ENCODE measurements at regions of chr20 and their contacts with region 1.

Region 1: GRCh38 chr20:53800808-53801604 is 207.4 kb upstream of the ZNF217 start:
- DNase-seq: peak; percentile 100
- ATAC-seq: peak; percentile 95
- H3K4me3 ChIP-seq: peak overlapping the region; percentile 28 to 48 (median 44); a peak in 4 of 6 replicates
- H3K27ac ChIP-seq: peak overlapping the region; percentile 86
- H3K4me1 ChIP-seq: peaks cover 92% of the 10 kb centered on the region
- H3K27me3 ChIP-seq: no peaks in the 10 kb centered on the region
- CTCF ChIP-seq: 0 out of 2 replicates have a peak, but pooled peaks have one; percentile 20
- EP300 ChIP-seq: peak; percentile 95 to 99; a peak in 3 of 4 replicates
- POLR2A ChIP-seq: 0 out of 4 replicates have a peak, but pooled peaks have one; percentile 23 to 36
- RAD21 ChIP-seq: peak; percentile 56

Region 2: DNA sequence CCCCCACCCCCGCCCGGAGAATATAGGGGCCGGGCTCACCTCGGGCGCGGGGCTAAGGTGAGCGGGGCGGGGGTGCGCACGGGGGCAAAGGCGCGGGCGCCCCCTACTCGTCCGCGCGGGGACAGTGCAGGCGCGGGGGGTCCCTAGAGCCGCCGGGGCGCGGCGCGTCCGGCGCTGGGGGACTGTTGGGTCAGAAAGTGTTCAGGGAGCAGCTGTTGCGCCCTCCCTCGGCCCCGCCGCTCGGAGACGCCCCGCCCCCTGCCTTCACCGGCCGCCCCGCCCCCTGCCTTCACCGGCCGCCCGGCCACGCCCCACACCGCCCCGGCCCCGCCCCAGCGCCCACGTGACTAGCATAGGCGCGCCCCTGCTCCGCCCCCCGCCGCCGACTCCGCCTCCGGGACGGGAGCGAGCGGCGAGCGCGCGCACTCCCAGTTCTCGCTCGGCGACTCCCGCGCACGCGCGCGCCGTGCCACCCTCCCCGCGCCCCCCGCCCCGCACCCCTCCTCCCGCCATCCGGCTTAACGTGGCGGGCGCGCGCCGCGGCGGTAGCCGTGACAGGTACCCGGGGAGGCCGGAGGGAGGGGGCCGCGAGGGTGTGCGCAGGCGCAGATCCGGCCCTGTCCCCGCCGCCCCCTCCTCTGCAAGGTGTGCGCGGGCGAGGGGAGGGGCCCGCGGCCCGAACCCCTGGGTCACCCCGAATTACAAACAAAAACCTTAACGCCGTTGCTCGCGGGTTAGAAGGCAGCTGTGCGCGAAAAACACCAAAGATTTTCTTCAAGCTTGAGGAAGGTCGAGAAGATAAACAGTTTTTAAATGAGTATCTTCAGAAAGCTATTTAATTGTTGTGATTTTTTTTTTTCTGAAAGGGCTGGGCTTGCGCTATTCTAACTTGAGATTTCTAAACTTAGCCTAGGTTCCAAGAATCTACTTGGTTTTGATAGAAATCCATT is 206.7 kb before region 1 on chr20:
- CTCF ChIA-PET with region 1: no interaction called
- POLR2A ChIA-PET with region 1: interaction called, 15 read pairs
- in situ Hi-C with region 1: no loop called
- intact Hi-C with region 1: no loop called
- DNase-seq: peak; percentile 89
- ATAC-seq: peak; percentile 88
- H3K4me3 ChIP-seq: peak overlapping the region; percentile 89 to 98 (median 90)
- H3K27ac ChIP-seq: peak overlapping the region; percentile 87
- H3K4me1 ChIP-seq: peaks cover 43% of the 10 kb centered on the region
- H3K27me3 ChIP-seq: no peaks in the 10 kb centered on the region; a peak in 1 of 5 replicates
- CTCF ChIP-seq: peak; percentile 88
- EP300 ChIP-seq: peak in 1 of 2 experiments; percentile 14; a peak in 1 of 4 replicates
- POLR2A ChIP-seq: peak; percentile 52 to 60
- RAD21 ChIP-seq: peak; percentile 91

Region 3: GRCh38 chr20:53718142-53719021 is 82.6 kb before region 1 on chr20:
- CTCF ChIA-PET with region 1: no interaction called
- POLR2A ChIA-PET with region 1: no interaction called
- in situ Hi-C with region 1: no loop called
- intact Hi-C with region 1: no loop called
- DNase-seq: no peak
- ATAC-seq: no peak
- H3K4me3 ChIP-seq: no peak overlapping the region
- H3K27ac ChIP-seq: no peak overlapping the region
- H3K4me1 ChIP-seq: peaks cover 11% of the 10 kb centered on the region; the same call in 1 of the 2 replicates
- H3K27me3 ChIP-seq: no peaks in the 10 kb centered on the region
- CTCF ChIP-seq: no peak
- EP300 ChIP-seq: no peak
- POLR2A ChIP-seq: no peak
- RAD21 ChIP-seq: no peak

Region 4: DNA sequence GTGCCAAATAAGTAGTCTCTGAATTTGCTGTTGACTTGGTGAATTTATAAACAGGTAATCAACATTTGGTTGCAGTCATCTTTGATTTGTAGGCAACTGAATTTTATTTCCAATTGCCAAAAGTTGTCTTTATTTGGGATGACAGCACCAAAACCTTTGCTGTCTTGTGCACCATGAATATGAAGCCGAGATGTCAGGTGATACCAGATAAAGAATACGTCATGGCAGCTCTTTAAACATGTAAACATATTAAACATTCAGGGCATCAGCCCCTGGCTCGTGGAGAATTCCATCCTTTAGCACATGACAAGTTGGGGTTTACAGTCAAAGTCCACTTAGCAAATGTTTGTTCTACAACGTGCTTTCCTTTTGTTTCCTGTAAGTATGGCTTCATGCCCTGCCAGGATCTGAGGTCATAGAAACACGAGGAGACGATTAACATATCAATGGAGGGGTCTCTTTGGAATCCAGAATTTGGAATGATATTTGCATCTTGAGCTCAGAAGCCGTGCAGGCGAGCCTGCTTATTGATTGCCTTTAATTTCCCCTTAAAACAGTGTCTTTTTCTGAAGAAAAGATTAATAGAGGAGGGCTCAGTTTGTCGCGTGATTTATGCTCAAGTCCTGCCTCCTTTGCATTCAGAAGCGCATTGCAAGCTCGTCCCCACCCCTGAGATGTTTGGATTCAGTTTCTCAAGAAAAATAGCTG is 37.1 kb before region 1 on chr20:
- CTCF ChIA-PET with region 1: no interaction called
- POLR2A ChIA-PET with region 1: interaction called, 43 read pairs
- in situ Hi-C with region 1: no loop called
- intact Hi-C with region 1: loop called (anchors 2 kb)
- DNase-seq: peak; percentile 100
- ATAC-seq: peak; percentile 95
- H3K4me3 ChIP-seq: no peak overlapping the region; a peak in 1 of 6 replicates
- H3K27ac ChIP-seq: peak overlapping the region; percentile 89
- H3K4me1 ChIP-seq: peaks cover 77% of the 10 kb centered on the region
- H3K27me3 ChIP-seq: no peaks in the 10 kb centered on the region
- CTCF ChIP-seq: no peak
- EP300 ChIP-seq: peak; percentile 95 to 99; a peak in 3 of 4 replicates
- POLR2A ChIP-seq: peak; percentile 26 to 48; a peak in 2 of 4 replicates
- RAD21 ChIP-seq: 0 out of 2 replicates have a peak, but pooled peaks have one; percentile 15

Region 5: DNA sequence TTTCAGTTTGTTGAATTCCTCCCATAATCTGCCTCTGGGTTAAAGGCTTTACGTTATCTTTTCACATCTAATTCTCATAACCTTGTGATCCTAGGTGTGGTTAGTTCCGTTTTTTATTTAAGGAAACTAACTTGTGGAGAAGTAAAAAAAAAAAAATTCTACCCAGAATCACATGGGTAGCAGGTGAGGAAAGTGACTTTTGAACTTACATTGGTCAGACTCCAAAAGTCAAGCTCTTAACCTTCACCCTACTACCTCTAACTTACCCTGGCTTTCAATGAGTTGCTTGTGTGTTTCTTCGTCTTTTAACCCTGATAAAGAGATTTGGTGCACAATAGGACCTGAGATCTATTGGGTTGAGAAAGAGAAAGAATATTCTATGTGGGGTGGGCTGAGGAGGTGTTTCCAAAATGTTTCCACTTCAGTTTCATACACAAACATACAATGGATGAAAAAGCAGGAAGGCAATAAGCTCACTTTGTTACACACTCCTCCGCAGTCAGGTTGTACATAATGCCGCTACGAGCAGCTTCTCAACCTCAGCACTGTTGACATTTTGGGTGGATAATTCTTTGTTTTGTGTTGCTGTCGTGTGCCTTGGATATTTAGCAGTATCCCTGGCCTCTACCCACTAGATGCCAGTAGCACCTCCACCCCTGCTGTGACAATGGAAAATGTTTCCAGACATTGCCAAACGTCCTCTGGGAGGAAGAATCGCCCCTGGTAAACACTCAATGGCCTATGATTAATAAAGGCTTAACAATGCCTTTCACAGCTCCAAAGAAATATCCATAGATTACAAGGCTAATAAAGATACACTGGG is 14.3 kb before region 1 on chr20:
- CTCF ChIA-PET with region 1: no interaction called
- POLR2A ChIA-PET with region 1: interaction called, 58 read pairs
- in situ Hi-C with region 1: no loop called
- intact Hi-C with region 1: no loop called
- DNase-seq: peak; percentile 56
- ATAC-seq: peak; percentile 77
- H3K4me3 ChIP-seq: peak overlapping the region; percentile 26 to 52 (median 27)
- H3K27ac ChIP-seq: peak overlapping the region; percentile 72
- H3K4me1 ChIP-seq: peaks cover 65% of the 10 kb centered on the region
- H3K27me3 ChIP-seq: no peaks in the 10 kb centered on the region
- CTCF ChIP-seq: peak; percentile 46
- EP300 ChIP-seq: peak in 1 of 2 experiments; percentile 82; a peak in 2 of 4 replicates
- POLR2A ChIP-seq: no peak
- RAD21 ChIP-seq: peak; percentile 40

Region 6: DNA sequence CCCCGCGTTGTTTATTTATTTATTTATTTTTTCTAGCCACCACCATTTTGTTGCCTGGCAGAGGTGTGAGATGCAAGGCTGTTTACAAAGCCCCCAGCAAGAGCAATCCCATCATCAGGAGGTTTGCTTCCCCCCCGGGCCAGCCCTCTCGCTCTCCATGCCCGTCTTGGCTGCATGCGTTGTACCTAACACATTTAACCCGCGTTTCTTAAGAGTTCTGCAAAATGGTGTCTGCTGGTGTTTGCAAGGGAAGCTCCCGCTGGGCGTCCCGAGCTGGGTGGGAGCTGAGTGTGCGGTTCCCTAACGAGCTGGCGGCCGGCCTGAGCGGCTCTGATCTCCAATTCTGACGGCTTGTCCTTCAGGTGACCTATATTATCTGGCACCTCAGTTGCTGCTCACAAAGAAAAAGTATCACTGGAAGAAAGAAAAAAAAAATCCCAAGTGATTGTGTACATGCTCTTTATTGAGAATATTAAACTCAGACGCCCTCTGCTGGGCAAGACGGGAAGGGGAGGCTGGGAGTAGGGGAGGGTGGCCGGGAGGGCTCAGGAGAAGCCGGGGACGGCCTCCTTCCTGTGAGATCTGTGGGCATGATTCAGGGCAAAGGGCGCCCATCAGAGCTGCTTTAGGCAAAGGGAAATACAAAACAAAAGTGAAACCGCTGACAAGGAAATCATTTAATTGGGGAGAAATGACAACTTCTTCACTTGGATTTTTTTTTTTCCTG is 114.6 kb after region 1 on chr20:
- CTCF ChIA-PET with region 1: no interaction called
- POLR2A ChIA-PET with region 1: interaction called, 8 read pairs
- in situ Hi-C with region 1: no loop called
- intact Hi-C with region 1: loop called (anchors 5 kb)
- DNase-seq: peak; percentile 84
- ATAC-seq: peak; percentile 92
- H3K4me3 ChIP-seq: peak overlapping the region; percentile 73 to 88 (median 80)
- H3K27ac ChIP-seq: peak overlapping the region; percentile 17
- H3K4me1 ChIP-seq: peaks cover 48% of the 10 kb centered on the region
- H3K27me3 ChIP-seq: peaks cover 0 to 2% of the 10 kb centered on the region in 2 experiments; a peak in 1 of 5 replicates
- CTCF ChIP-seq: peak; percentile 96
- EP300 ChIP-seq: no peak; a peak in 1 of 4 replicates
- POLR2A ChIP-seq: no peak
- RAD21 ChIP-seq: peak; percentile 83